ENCODE measurements at regions of chr14 and their contacts with region 1.

Region 1: DNA sequence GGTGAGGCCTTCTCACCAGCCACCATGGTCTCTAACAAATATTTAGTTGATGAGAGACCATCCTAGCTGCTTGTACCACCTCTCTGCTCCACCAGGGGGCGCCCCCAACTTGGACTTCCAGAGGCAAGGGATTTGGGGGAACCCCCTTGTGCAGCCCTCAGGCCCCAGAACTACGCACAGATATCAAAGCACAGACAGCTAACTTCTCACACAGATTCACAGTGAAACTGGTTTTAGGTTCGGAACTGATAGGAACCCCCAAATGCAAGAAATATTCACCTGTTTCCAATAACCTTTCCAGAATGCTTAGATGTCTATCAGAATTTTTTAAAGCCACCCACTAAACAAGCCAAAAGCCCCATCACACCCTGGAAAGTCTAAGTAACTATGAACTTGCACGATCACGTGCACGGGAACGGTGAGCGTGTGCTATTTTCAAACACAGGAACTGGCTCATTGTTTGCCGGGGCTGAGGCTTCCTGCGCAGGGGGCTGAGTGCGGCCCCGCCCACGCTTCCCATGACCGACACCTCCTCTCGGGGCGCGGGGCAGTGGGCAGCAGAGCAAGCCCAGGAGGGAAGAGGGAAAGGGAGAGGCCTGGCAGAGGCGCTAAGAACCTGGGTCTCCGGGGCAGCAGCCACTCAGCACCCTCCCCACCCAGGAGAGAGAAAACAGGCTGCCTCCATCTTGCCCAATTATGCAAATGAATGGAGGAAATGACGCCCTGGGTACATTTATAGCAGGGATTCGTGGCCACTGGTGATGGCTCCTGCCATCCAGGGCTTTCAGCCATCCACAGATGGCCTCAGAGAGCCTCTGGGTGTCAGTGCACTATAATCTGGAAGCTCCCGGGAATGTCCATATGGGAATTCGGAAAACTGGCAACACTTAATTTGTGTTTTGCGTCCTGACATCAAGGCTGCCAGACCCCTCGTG is 79.4 kb upstream of the GPR68 start:
- DNase-seq: peak; percentile 93
- ATAC-seq: peak; percentile 88

Region 2: DNA sequence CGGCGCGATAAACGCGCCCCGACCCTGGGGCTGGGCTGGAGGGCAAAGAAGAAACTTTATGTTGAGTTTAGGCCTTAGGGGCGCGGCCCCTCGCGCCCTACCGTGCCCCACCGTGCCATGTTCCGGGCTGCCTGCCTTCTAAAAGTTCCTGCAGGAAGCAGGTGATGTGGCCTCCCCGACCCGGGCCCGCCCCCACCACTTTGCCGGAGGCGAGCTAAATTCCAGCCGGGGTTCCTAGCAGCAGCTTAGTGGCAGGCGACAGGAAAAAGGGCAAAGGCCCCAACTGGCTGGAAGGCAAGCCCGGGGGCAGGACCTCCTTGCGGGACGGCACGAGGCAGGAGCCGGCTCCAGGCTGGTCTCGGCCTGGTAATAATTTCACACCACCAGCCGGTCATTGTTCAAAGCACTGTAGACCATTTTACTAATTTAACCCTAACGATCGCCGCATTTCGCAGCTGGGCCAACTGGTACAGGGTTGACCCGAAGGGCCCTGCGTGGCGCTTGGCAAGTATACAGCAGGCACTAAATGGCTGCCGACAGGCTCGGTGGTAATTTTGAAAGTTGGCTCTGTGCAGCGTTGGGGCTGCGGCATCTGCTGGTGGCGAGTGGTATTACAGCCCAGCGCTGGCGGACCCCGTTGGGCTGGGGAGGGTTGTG is 94.6 kb after region 1 on chr14:
- intact Hi-C with region 1: loop called (anchors 2 kb)
- DNase-seq: peak; percentile 87
- ATAC-seq: peak; percentile 86

Measured in Right ventricle myocardium superior (tissue), 1 donor.